ENCODE measurements at regions of chr7 and their contacts with region 1.

Region 1: GRCh38 chr7:90455163-90456030 is 14.0 kb upstream of the PTTG1IP2 start:
- DNase-seq: peak; percentile 7
- H3K4me3 ChIP-seq: peak overlapping the region; percentile 22; the same call in 1 of the 2 replicates
- H3K27me3 ChIP-seq: no peaks in the 10 kb centered on the region; the same call in 1 of the 2 replicates
- CTCF ChIP-seq: peak; percentile 71

Region 2: GRCh38 chr7:90465816-90466215 is 10.4 kb after region 1 on chr7:
- CTCF ChIA-PET with region 1: interaction called, 10 read pairs
- POLR2A ChIA-PET with region 1: no interaction called
- DNase-seq: no peak
- H3K4me3 ChIP-seq: no peak overlapping the region
- H3K27me3 ChIP-seq: no peaks in the 10 kb centered on the region
- CTCF ChIP-seq: no peak

Region 3: GRCh38 chr7:90474284-90475210 is 19.1 kb after region 1 on chr7:
- CTCF ChIA-PET with region 1: interaction called, 11 read pairs
- POLR2A ChIA-PET with region 1: no interaction called
- DNase-seq: peak; percentile 18
- H3K4me3 ChIP-seq: no peak overlapping the region
- H3K27me3 ChIP-seq: no peaks in the 10 kb centered on the region
- CTCF ChIP-seq: no peak

Region 4: GRCh38 chr7:90502539-90502938 is 47.1 kb after region 1 on chr7:
- CTCF ChIA-PET with region 1: no interaction called
- POLR2A ChIA-PET with region 1: no interaction called
- DNase-seq: no peak
- H3K4me3 ChIP-seq: no peak overlapping the region
- H3K27me3 ChIP-seq: no peaks in the 10 kb centered on the region
- CTCF ChIP-seq: no peak

Region 5: DNA sequence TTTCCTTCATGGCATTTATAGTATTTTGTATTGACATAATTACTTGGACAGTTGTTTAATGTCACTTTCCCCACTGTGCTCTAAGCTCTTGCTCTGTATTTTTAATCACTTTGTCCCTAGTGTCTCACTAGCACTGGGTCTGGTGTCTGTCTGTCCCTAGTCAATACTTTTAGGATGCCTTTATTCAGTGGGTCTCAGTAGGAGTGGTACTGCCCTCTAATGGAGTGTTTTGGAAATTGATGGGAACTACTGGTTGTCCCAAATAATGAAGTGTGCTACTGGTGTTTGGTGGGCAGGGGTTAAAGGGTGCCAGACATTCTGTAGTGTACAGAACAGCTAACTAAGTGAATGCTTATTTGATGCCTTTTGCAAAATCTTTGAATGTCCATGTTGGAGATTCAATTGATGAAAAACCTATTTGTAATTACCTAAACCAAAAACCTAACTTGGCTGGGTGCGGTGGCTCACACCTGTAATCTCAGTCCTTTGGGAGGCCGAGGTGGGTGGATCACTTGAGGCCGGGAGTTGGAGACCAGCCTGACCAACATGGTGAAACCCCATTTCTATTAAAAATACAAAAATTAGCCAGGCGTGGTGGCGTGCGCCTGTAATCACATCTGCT is 174.0 kb after region 1 on chr7:
- CTCF ChIA-PET with region 1: interaction called, 13 read pairs
- POLR2A ChIA-PET with region 1: no interaction called
- DNase-seq: no peak
- H3K4me3 ChIP-seq: no peak overlapping the region
- H3K27me3 ChIP-seq: no peaks in the 10 kb centered on the region
- CTCF ChIP-seq: peak; percentile 66